Naive thymus-derived CD4-positive, alpha-beta T cell (primary cell): ENCODE measurements at regions of chr17 and their contacts with region 1.

Region 1: GRCh38 chr17:48457080-48457836 is 27.2 kb upstream of the SKAP1 start:
- DNase-seq: peak; percentile 60 to 84 (median 76)
- ATAC-seq: peak; percentile 93
- H3K4me3 ChIP-seq: peak overlapping the region; percentile 47
- H3K4me3 Mint-ChIP-seq: peak overlapping the region; percentile 50 to 84 (median 77)
- H3K27ac ChIP-seq: no peak overlapping the region
- H3K27ac Mint-ChIP-seq: peak overlapping the region in 6 of 9 donors; percentile 28 to 76 (median 44)
- H3K4me1 ChIP-seq: peaks cover 53% of the 10 kb centered on the region in 2 donors
- H3K4me1 Mint-ChIP-seq: peaks cover 37 to 60% (median 54%) of the 10 kb centered on the region in 7 donors
- H3K27me3 ChIP-seq: no peaks in the 10 kb centered on the region
- H3K27me3 Mint-ChIP-seq: peaks cover 0 to under 1% (median 0%) of the 10 kb centered on the region in 5 donors

Region 2: GRCh38 chr17:47862621-47863440 is 594.4 kb before region 1 on chr17:
- CTCF ChIA-PET with region 1: no interaction called
- POLR2A ChIA-PET with region 1: no interaction called
- intact Hi-C with region 1: no loop called
- DNase-seq: no peak
- ATAC-seq: no peak
- H3K4me3 ChIP-seq: no peak overlapping the region
- H3K4me3 Mint-ChIP-seq: no peak overlapping the region
- H3K27ac ChIP-seq: no peak overlapping the region
- H3K27ac Mint-ChIP-seq: no peak overlapping the region
- H3K4me1 ChIP-seq: no peaks in the 10 kb centered on the region
- H3K4me1 Mint-ChIP-seq: peaks cover 0 to 28% (median 16%) of the 10 kb centered on the region in 7 donors
- H3K27me3 ChIP-seq: no peaks in the 10 kb centered on the region
- H3K27me3 Mint-ChIP-seq: peaks cover 0 to 26% (median 7%) of the 10 kb centered on the region in 5 donors

Region 3: GRCh38 chr17:48335858-48336500 is 121.3 kb before region 1 on chr17:
- CTCF ChIA-PET with region 1: interaction called, 4 read pairs
- POLR2A ChIA-PET with region 1: interaction called, 3 read pairs
- intact Hi-C with region 1: loop called (anchors 1 to 5 kb)
- DNase-seq: peak in 7 of 9 donors; percentile 27 to 70 (median 63)
- ATAC-seq: peak; percentile 77
- H3K4me3 ChIP-seq: no peak overlapping the region
- H3K4me3 Mint-ChIP-seq: no peak overlapping the region
- H3K27ac ChIP-seq: no peak overlapping the region
- H3K27ac Mint-ChIP-seq: peak overlapping the region in 1 of 9 donors; percentile 15
- H3K4me1 ChIP-seq: peaks cover 0 to 3% of the 10 kb centered on the region in 2 donors
- H3K4me1 Mint-ChIP-seq: peaks cover 3 to 25% (median 12%) of the 10 kb centered on the region in 7 donors
- H3K27me3 ChIP-seq: no peaks in the 10 kb centered on the region
- H3K27me3 Mint-ChIP-seq: no peaks in the 10 kb centered on the region

Region 4: DNA sequence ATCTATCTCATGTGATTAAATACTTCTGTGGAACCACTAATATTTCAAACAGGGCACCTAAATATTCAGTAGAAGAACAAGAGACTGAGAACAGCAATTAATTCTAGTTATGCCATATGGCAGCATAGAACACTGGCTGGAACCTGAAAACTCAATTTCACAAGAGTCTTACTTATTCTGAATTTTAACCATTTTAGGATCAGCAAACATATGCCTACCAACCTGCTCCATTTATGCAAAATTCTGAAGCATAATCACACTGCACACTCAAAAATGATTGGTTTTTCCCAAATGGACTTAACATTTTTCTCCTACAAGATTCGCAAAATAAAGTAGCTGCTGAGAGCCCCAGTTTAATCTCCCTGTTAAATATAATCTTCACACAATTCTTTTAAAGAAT is 70.4 kb before region 1 on chr17:
- CTCF ChIA-PET with region 1: interaction called, 5 read pairs
- POLR2A ChIA-PET with region 1: interaction called, 4 read pairs
- intact Hi-C with region 1: loop called in 1 of 2 experiments (anchors 2 kb)
- DNase-seq: no peak
- ATAC-seq: no peak
- H3K4me3 ChIP-seq: no peak overlapping the region
- H3K4me3 Mint-ChIP-seq: peak overlapping the region in 2 of 10 donors; percentile 0 to 42
- H3K27ac ChIP-seq: no peak overlapping the region
- H3K27ac Mint-ChIP-seq: no peak overlapping the region
- H3K4me1 ChIP-seq: peaks cover 4 to 10% of the 10 kb centered on the region in 2 donors
- H3K4me1 Mint-ChIP-seq: peaks cover 22 to 89% (median 73%) of the 10 kb centered on the region in 7 donors
- H3K27me3 ChIP-seq: no peaks in the 10 kb centered on the region
- H3K27me3 Mint-ChIP-seq: no peaks in the 10 kb centered on the region

Region 5: GRCh38 chr17:48429638-48430586 is 27.3 kb before region 1 on chr17 and contains the start of gene SKAP1:
- CTCF ChIA-PET with region 1: interaction called, 7 read pairs
- POLR2A ChIA-PET with region 1: interaction called, 183 read pairs
- intact Hi-C with region 1: loop called (anchors 1 kb)
- DNase-seq: peak; percentile 52 to 80 (median 62)
- ATAC-seq: peak; percentile 84
- H3K4me3 ChIP-seq: peak within 1 kb of the TSS; percentile 92
- H3K4me3 Mint-ChIP-seq: peak within 1 kb of the TSS; percentile 90 to 100 (median 98)
- H3K27ac ChIP-seq: peak within 1 kb of the TSS; percentile 97
- H3K27ac Mint-ChIP-seq: peak within 1 kb of the TSS; percentile 91 to 99 (median 98)
- H3K4me1 ChIP-seq: peaks cover 36 to 58% of the 10 kb centered on the region in 2 donors
- H3K4me1 Mint-ChIP-seq: peaks cover 50 to 93% (median 82%) of the 10 kb centered on the region in 7 donors
- H3K27me3 ChIP-seq: no peaks in the 10 kb centered on the region
- H3K27me3 Mint-ChIP-seq: no peaks in the 10 kb centered on the region
- total RNA-seq, gene SKAP1: 99.3 to 117 (median 109) TPM

Region 6: DNA sequence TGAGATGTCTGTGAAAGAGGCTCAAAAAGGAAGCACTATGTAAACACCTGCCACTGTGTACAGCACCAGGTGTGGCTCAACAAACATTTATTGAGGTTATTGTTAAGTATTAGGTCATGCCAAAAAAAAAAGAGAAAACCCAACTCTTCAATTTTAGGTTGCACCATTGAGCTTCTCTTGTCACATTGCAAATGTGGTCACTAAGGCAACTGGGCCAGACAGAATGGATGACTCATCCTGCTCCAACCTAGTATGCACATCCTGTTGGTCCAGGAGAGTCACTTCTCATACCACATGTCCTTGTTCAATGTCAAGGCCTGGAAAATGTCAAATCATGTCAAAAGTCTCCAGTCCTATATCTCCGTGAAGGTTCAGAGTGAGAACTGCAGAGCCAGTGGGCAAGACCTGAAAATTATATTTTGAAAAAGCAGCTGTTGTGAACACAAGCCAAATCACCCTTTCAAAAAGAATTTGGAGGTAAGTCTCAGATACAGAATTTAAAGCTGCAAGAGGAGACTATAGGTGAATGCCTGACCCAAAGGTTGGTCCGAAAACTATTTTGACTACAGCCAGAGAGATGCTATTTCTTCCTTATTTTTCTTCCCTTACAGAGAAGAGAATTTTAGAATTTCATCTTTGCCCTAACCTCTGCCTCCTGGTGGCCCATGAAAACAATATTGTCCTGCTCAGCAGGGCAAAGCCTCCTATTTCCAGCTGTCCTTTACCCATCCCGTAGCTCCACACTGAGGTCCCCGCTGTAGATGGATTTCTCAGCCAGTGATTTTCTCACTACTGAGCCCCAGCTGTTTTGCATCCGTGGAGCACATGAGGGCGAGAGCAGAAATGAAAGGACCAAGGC is 48.8 kb after region 1 on chr17:
- CTCF ChIA-PET with region 1: no interaction called
- POLR2A ChIA-PET with region 1: no interaction called
- intact Hi-C with region 1: loop called in 1 of 2 experiments (anchors 5 kb)
- DNase-seq: peak in 2 of 9 donors; percentile 30 to 33
- ATAC-seq: peak; percentile 89
- H3K4me3 ChIP-seq: no peak overlapping the region
- H3K4me3 Mint-ChIP-seq: peak overlapping the region in 1 of 10 donors; percentile 46
- H3K27ac ChIP-seq: no peak overlapping the region
- H3K27ac Mint-ChIP-seq: peak overlapping the region in 3 of 9 donors; percentile 18 to 91 (median 20)
- H3K4me1 ChIP-seq: peaks cover 0 to 5% of the 10 kb centered on the region in 2 donors
- H3K4me1 Mint-ChIP-seq: peaks cover 0 to 62% (median 6%) of the 10 kb centered on the region in 7 donors
- H3K27me3 ChIP-seq: no peaks in the 10 kb centered on the region
- H3K27me3 Mint-ChIP-seq: peaks cover 6 to 29% (median 24%) of the 10 kb centered on the region in 5 donors

Region 7: DNA sequence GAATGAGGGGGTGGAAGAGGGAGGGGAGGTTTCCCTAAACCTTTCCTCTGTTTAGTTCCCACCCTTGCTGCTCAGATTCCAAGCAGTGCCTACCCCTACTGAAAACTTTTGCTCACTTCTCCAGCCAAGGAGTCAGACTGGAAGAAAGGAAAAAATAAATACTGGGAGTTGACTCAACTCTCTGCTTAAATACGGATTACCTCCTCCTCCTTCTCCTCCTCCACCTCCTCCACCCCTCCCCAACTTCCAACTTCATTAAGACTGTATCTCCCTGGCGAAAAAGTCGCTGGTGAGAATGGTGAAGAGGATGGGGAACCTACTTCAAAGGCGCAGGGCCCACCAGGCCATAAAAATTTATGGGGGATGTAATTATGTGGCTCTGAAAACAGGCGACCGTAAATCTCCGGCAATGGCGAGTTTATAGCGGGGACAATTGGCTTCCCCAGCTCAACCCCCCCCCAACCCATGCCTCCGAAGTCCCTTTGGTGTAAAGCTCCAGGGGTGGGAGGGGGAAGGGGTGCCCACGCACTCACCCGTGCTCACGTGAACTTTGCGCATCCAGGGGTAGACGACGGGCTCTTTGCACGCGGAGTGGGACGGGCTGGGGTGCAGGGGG is 120.2 kb after region 1 on chr17:
- CTCF ChIA-PET with region 1: no interaction called
- POLR2A ChIA-PET with region 1: no interaction called
- intact Hi-C with region 1: no loop called
- DNase-seq: no peak
- ATAC-seq: peak; percentile 37
- H3K4me3 ChIP-seq: peak overlapping the region; percentile 46
- H3K4me3 Mint-ChIP-seq: peak overlapping the region; percentile 80 to 93 (median 86)
- H3K27ac ChIP-seq: no peak overlapping the region
- H3K27ac Mint-ChIP-seq: peak overlapping the region in 4 of 9 donors; percentile 21 to 73 (median 36)
- H3K4me1 ChIP-seq: peaks cover 15 to 24% of the 10 kb centered on the region in 2 donors
- H3K4me1 Mint-ChIP-seq: peaks cover 12 to 56% (median 47%) of the 10 kb centered on the region in 7 donors
- H3K27me3 ChIP-seq: peaks cover 6 to 36% of the 10 kb centered on the region in 2 donors
- H3K27me3 Mint-ChIP-seq: peaks cover 38 to 64% (median 43%) of the 10 kb centered on the region in 5 donors